Endothelial cell of umbilical vein (primary cell): ENCODE measurements at regions of chr4 and their contacts with region 1.

Region 1: GRCh38 chr4:158856852-158857251 is 88.0 kb downstream of the FNIP2 start:
- DNase-seq: peak; percentile 70
- H3K4me3 ChIP-seq: no peak overlapping the region
- H3K27ac ChIP-seq: no peak overlapping the region
- H3K4me1 ChIP-seq: no peaks in the 10 kb centered on the region
- H3K27me3 ChIP-seq: no peaks in the 10 kb centered on the region
- CTCF ChIP-seq: peak; percentile 19 to 43
- POLR2A ChIP-seq: no peak

Region 2: DNA sequence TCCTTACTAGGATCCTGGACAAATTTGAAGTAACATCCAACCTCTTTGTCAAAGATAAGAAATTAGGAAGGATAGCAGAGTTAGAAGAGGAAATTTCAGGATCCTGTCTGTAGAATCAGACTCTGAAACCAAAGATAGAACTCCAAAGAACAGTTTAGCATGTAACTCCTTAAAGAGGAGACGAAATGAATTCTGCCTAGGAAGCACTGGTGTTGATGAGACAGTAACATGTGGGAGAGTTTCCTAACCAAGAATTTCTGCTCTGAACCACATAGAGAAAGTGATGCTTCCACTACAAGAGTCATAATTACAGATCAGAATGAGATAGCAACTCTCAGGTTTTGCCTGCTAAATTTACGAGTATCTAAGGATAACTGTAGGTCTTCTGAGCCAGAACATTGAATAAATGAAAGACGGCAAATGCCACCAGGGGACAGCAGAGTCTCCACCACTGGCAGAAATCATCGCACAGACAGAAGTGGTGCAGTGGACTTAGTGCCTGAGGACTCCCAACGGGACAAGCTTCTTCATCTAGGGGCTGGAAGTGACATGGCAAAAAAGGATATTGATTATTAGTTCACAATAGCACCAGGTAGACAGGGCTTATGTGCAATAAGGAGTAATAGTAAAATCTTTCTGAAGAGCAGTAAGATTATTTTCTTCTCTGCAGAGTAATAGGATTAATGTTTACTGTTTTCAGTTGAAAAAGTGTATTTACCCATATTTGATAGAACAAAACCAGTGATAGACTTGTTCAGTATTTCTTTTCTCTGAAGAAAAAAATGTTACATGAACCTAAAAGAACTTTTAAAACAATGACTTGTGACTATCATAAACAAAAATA is 126.9 kb before region 1 on chr4:
- CTCF ChIA-PET with region 1: interaction called, 50 read pairs
- POLR2A ChIA-PET with region 1: no interaction called
- dilution Hi-C with region 1: no loop called
- intact Hi-C with region 1: no loop called
- DNase-seq: peak; percentile 84
- H3K4me3 ChIP-seq: no peak overlapping the region
- H3K27ac ChIP-seq: no peak overlapping the region
- H3K4me1 ChIP-seq: no peaks in the 10 kb centered on the region
- H3K27me3 ChIP-seq: peaks cover 9 to 14% of the 10 kb centered on the region in 2 experiments
- CTCF ChIP-seq: peak; percentile 71 to 78
- POLR2A ChIP-seq: no peak

Region 3: GRCh38 chr4:159191989-159192388 is 335.1 kb after region 1 on chr4:
- CTCF ChIA-PET with region 1: interaction called, 35 read pairs
- POLR2A ChIA-PET with region 1: no interaction called
- dilution Hi-C with region 1: no loop called
- intact Hi-C with region 1: no loop called
- DNase-seq: peak; percentile 31
- H3K4me3 ChIP-seq: no peak overlapping the region
- H3K27ac ChIP-seq: peak overlapping the region; percentile 24
- H3K4me1 ChIP-seq: peaks cover 21% of the 10 kb centered on the region
- H3K27me3 ChIP-seq: no peaks in the 10 kb centered on the region
- CTCF ChIP-seq: peak; percentile 13 to 38
- POLR2A ChIP-seq: no peak

Region 4: DNA sequence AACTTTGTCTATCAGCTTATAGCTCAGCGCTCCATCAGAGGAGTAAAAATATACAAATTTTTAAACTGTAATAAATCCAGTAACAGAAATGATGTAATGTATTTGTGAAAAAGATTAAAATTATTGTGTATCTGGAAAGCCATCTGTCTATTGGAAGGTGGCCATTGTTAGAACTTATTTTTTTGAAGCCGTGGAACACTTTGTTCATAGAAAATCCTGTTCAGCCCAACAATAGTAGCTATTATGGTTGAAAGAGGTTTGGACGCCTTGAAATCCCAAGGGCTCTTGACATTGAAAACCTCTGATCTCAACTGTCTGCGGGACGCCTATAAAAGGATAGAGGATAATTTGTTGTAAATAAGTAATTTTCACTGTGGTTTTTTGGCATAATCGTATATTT is 344.3 kb after region 1 on chr4:
- CTCF ChIA-PET with region 1: interaction called, 92 read pairs
- POLR2A ChIA-PET with region 1: no interaction called
- dilution Hi-C with region 1: no loop called
- intact Hi-C with region 1: loop called (anchors 1 kb)
- DNase-seq: peak; percentile 60
- H3K4me3 ChIP-seq: no peak overlapping the region
- H3K27ac ChIP-seq: no peak overlapping the region
- H3K4me1 ChIP-seq: peaks cover 12% of the 10 kb centered on the region
- H3K27me3 ChIP-seq: no peaks in the 10 kb centered on the region
- CTCF ChIP-seq: no peak
- POLR2A ChIP-seq: no peak

Region 5: DNA sequence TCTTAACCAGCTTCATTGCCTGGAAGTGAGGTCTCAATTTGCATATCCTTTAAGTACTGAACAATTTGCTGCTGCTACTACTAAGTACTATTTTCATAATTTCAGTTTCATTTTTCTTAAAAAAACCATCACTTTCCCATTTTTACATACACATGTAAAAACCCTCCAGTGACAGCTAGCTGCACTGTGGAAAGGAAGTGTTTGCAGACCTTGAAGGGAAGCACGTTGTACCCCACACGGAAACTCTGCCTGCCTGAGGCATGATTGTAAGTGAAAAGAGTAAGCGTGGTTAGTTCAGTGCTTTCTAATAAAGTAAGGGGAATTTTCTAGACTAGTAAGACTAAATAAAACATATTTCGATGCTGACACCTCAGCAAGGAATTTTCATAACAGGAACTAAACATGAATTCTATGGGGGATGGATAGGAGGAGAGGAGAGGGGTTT is 349.6 kb after region 1 on chr4:
- CTCF ChIA-PET with region 1: interaction called, 92 read pairs
- POLR2A ChIA-PET with region 1: no interaction called
- dilution Hi-C with region 1: no loop called
- intact Hi-C with region 1: loop called (anchors 1 kb)
- DNase-seq: peak; percentile 73
- H3K4me3 ChIP-seq: no peak overlapping the region
- H3K27ac ChIP-seq: no peak overlapping the region
- H3K4me1 ChIP-seq: peaks cover 27% of the 10 kb centered on the region
- H3K27me3 ChIP-seq: no peaks in the 10 kb centered on the region
- CTCF ChIP-seq: no peak
- POLR2A ChIP-seq: no peak

Region 6: DNA sequence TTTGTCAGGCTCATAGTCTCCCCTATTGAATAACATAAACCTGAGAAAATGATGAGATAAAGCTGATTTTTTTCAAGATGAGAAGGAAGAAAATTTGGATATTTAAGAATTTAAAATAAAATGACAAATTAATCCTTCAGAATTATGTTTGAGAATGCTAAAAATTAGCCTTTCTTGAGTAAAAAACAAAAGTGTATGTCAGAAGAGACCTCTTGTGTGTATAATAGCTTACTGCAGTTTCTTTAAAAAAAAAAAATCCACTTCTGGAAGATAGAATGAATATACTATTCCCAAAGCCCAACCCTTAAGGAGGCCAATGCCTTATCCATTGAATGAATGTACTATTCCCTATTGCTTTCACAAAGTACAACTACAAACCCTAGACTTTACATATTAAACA is 527.8 kb after region 1 on chr4:
- CTCF ChIA-PET with region 1: interaction called, 10 read pairs
- POLR2A ChIA-PET with region 1: no interaction called
- dilution Hi-C with region 1: no loop called
- intact Hi-C with region 1: no loop called
- DNase-seq: no peak
- H3K4me3 ChIP-seq: no peak overlapping the region
- H3K27ac ChIP-seq: no peak overlapping the region
- H3K4me1 ChIP-seq: peaks cover 16% of the 10 kb centered on the region
- H3K27me3 ChIP-seq: no peaks in the 10 kb centered on the region
- CTCF ChIP-seq: no peak
- POLR2A ChIP-seq: no peak

Region 7: GRCh38 chr4:159455675-159456237 is 598.9 kb after region 1 on chr4:
- CTCF ChIA-PET with region 1: interaction called, 12 read pairs
- POLR2A ChIA-PET with region 1: no interaction called
- dilution Hi-C with region 1: no loop called
- intact Hi-C with region 1: loop called (anchors 2 kb)
- DNase-seq: peak; percentile 63
- H3K4me3 ChIP-seq: peak overlapping the region in 1 of 3 experiments; percentile 40
- H3K27ac ChIP-seq: no peak overlapping the region
- H3K4me1 ChIP-seq: no peaks in the 10 kb centered on the region
- H3K27me3 ChIP-seq: peaks cover 0 to 2% of the 10 kb centered on the region in 2 experiments
- CTCF ChIP-seq: peak; percentile 67
- POLR2A ChIP-seq: no peak